Endothelial cell of umbilical vein (primary cell): ENCODE measurements at regions of chr2 and their contacts with region 1.

Region 1: DNA sequence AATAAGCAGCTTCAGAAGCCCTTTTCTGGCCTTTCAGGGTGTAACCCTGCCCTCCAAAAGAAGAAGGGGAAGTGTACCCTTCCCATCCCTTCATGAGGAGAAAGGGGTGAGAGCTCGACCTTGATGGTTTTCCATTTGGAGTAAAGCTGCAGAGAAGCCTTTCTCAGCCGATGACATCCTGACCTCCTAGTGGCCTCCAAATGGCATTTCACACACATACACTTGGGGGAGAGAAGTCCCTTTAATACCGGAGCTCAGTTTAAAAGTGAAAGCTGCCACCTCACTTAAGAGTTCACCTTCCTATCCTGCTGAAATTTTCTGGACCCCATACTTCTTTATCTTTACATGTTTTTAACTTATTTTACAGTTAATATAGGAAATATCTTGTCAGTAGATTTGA is 716.7 kb downstream of the DCDC2C start:
- DNase-seq: no peak
- H3K4me3 ChIP-seq: peak overlapping the region in 1 of 3 experiments; percentile 15
- H3K27ac ChIP-seq: peak overlapping the region; percentile 48
- H3K4me1 ChIP-seq: peaks cover 25% of the 10 kb centered on the region
- H3K27me3 ChIP-seq: no peaks in the 10 kb centered on the region
- CTCF ChIP-seq: no peak
- POLR2A ChIP-seq: no peak

Region 2: DNA sequence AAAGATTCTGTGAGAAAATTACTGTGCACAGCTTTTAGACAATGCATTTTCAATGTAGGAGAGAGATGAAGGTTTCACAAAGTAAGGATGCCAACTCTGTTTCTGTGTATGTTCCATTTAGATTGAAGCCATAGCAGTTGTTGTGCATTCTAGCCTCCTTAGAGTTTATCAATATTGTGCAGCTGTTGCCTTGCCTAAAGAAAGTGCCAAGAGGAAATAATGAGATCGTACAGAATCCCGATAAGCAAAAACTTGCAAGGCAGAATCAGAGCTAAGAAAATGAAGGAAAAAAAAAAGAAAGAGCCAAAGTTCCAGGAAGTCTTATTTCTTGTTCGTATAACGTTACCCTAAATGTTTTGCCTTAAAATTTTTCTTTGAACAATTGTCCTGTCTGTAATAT is 248.3 kb after region 1 on chr2:
- CTCF ChIA-PET with region 1: no interaction called
- POLR2A ChIA-PET with region 1: no interaction called
- dilution Hi-C with region 1: no loop called
- intact Hi-C with region 1: loop called (anchors 2 kb)
- DNase-seq: peak; percentile 91
- H3K4me3 ChIP-seq: peak overlapping the region in 1 of 3 experiments; percentile 11
- H3K27ac ChIP-seq: peak overlapping the region; percentile 44
- H3K4me1 ChIP-seq: peaks cover 4% of the 10 kb centered on the region
- H3K27me3 ChIP-seq: no peaks in the 10 kb centered on the region
- CTCF ChIP-seq: no peak
- POLR2A ChIP-seq: no peak